ENCODE measurements at regions of chr12 and their contacts with region 1.

Region 1: DNA sequence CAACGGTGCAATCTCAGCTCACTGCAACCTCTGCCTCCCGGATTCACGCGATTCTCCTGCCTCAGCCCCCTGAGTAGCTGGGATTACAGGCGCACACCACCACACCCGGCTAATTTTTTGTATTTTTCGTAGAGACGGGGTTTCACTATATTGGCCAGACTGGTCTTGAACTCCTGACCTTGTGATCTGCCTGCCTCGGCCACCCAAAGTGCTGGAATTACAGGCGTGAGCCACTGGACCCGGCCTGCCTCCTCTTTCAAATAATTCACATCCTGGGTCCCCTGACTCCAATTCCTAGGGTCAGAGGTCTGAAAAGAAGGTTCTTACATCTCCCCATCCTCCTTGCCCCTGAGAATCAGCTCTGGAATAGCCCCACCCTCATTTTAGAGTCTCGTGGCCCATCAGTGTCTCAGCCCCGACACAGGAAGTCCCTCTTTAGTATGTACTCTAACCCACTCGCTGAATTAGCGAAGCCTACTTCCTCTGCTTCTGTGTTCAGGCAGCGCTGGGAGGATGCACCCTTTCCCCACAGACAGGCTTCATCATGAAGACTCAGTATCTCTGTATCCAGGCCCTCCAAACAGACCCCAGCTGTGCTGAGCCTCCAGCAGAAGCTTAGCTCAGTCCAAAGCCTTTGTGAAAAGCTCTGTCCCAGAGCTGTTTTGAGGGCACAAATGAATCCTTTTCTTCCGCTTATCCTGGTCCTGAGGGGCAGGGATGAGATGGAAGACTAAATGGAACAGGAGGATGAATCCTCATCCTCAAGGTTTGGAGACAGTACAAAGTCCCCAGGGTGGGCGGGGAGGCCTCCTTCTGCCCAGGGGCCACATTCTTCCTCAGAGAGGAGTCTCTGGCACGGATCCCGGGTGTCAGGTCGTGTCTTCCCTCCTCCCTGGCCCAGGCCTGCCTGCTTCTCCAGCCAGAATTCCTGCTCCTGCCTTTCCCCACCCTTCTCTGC is 3.5 kb downstream of the LPAR5 start:
- DNase-seq: peak; percentile 69
- ATAC-seq: peak; percentile 68
- H3K4me3 Mint-ChIP-seq: peak overlapping the region; percentile 71
- H3K27ac Mint-ChIP-seq: peak overlapping the region; percentile 99
- H3K4me1 Mint-ChIP-seq: peaks cover 59% of the 10 kb centered on the region
- H3K27me3 Mint-ChIP-seq: no peaks in the 10 kb centered on the region

Region 2: DNA sequence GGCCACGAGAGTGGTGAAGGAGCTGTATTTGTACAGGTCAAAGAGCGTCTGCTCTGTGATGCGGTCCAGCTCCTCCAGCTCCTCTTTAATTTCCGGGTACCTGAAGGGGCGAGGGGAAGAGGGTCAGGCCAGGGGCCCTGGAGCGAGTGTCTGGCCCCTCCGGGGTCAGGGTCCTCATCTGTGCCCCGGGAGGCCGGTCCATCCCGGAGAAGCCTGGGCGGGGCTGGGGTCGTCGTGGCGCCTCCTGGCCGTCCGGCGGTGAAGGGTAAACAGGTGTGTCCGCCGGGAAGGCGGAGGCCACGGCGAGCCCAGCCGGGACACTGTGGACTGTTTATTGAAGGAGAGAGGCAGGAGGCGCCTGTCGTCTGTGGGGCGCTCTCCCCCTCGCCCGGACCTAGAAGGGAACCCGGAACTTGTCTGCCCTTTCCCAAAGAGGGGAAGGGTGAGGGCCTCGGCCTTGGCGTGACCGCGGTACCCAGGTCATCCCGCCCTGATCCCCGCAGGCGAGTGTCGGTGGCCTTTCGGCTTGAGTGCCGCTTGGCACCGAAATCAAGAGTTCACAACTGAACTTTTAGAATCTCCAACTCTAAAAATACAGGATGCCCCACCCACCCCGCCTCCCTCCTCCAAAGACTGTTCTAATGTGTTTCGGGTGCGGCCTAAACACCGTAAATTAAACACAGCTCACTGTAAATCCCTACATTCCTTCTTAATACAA is 268.5 kb before region 1 on chr12:
- CTCF ChIA-PET with region 1: no interaction called
- POLR2A ChIA-PET with region 1: no interaction called
- intact Hi-C with region 1: no loop called
- DNase-seq: peak; percentile 52
- ATAC-seq: peak; percentile 18
- H3K4me3 Mint-ChIP-seq: peak overlapping the region; percentile 68
- H3K27ac Mint-ChIP-seq: peak overlapping the region; percentile 63
- H3K4me1 Mint-ChIP-seq: peaks cover 44% of the 10 kb centered on the region
- H3K27me3 Mint-ChIP-seq: no peaks in the 10 kb centered on the region

Region 3: GRCh38 chr12:6620137-6620884 is 12.0 kb before region 1 on chr12:
- CTCF ChIA-PET with region 1: interaction called, 41 read pairs
- POLR2A ChIA-PET with region 1: no interaction called
- intact Hi-C with region 1: loop called in 1 of 2 experiments (anchors 2 kb)
- DNase-seq: peak; percentile 82
- ATAC-seq: peak; percentile 82
- H3K4me3 Mint-ChIP-seq: peak overlapping the region; percentile 67
- H3K27ac Mint-ChIP-seq: peak overlapping the region; percentile 73
- H3K4me1 Mint-ChIP-seq: peaks cover 8% of the 10 kb centered on the region
- H3K27me3 Mint-ChIP-seq: no peaks in the 10 kb centered on the region

Region 4: DNA sequence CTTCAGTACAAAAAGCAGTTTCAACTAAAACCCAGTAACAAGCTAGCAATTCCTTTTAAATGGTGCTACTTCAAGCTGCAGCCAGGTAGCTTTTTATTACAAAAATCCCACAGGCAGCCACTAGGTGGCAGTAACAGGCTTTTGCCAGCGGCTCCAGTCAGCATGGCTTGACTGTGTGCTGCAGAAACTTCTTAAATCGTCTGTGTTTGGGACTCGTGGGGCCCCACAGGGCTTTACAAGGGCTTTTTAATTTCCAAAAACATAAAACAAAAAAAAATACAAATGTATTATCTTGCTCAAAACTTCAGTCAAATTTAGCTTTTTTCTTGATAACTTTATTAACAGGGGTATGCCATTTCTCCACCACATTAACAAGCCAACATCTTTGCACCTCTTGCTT is 1912.0 kb after region 1 on chr12:
- CTCF ChIA-PET with region 1: no interaction called
- POLR2A ChIA-PET with region 1: no interaction called
- intact Hi-C with region 1: no loop called
- DNase-seq: peak; percentile 83
- ATAC-seq: peak; percentile 73
- H3K4me3 Mint-ChIP-seq: no peak overlapping the region
- H3K27ac Mint-ChIP-seq: no peak overlapping the region
- H3K4me1 Mint-ChIP-seq: peaks cover 3% of the 10 kb centered on the region
- H3K27me3 Mint-ChIP-seq: peaks cover 22% of the 10 kb centered on the region

Measured in activated CD4-positive, alpha-beta T cell treated with anti-CD3 and anti-CD28 coated beads for 36 hours (primary cell).